ENCODE measurements at regions of chr2 and their contacts with region 1.

Region 1: DNA sequence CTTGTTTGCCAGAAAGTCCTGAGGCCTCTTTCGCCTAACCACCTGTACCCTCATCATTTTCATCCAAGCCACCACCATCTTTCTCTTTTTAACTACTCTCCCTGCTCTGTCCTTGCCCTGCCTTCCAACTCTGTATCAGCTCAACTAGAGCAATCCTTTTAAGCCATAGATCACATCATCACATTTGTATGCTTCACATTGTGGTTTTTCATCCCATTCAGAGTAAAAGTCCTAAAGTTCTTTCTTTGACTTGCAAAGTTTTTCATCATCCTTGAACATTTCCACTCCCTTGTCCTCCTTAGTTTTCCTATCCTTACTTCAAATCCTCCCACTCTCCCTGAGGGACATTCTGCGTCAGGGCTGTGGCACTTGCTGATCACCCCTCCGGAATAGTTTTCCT is 73.9 kb downstream of the SLC39A10 start:
- DNase-seq: no peak
- ATAC-seq: no peak
- H3K4me3 ChIP-seq: no peak overlapping the region
- H3K27ac ChIP-seq: no peak overlapping the region
- H3K4me1 ChIP-seq: no peaks in the 10 kb centered on the region; the same call in 1 of the 2 replicates
- H3K27me3 ChIP-seq: no peaks in the 10 kb centered on the region
- CTCF ChIP-seq: no peak
- POLR2A ChIP-seq: no peak
- RAD21 ChIP-seq: no peak

Region 2: GRCh38 chr2:194054313-194054712 is 1676.6 kb before region 1 on chr2:
- CTCF ChIA-PET with region 1: no interaction called
- POLR2A ChIA-PET with region 1: no interaction called
- dilution Hi-C with region 1: no loop called
- in situ Hi-C with region 1: no loop called
- intact Hi-C with region 1: no loop called
- DNase-seq: no peak
- ATAC-seq: no peak
- H3K4me3 ChIP-seq: no peak overlapping the region
- H3K27ac ChIP-seq: no peak overlapping the region
- H3K4me1 ChIP-seq: no peaks in the 10 kb centered on the region
- H3K27me3 ChIP-seq: no peaks in the 10 kb centered on the region
- CTCF ChIP-seq: no peak
- POLR2A ChIP-seq: no peak
- RAD21 ChIP-seq: no peak

Region 3: GRCh38 chr2:195021711-195022507 is 709.0 kb before region 1 on chr2:
- CTCF ChIA-PET with region 1: no interaction called
- POLR2A ChIA-PET with region 1: no interaction called
- dilution Hi-C with region 1: no loop called
- in situ Hi-C with region 1: no loop called
- intact Hi-C with region 1: no loop called
- DNase-seq: no peak
- ATAC-seq: no peak
- H3K4me3 ChIP-seq: no peak overlapping the region
- H3K27ac ChIP-seq: no peak overlapping the region
- H3K4me1 ChIP-seq: no peaks in the 10 kb centered on the region
- H3K27me3 ChIP-seq: no peaks in the 10 kb centered on the region
- CTCF ChIP-seq: no peak
- POLR2A ChIP-seq: no peak
- RAD21 ChIP-seq: no peak

Region 4: DNA sequence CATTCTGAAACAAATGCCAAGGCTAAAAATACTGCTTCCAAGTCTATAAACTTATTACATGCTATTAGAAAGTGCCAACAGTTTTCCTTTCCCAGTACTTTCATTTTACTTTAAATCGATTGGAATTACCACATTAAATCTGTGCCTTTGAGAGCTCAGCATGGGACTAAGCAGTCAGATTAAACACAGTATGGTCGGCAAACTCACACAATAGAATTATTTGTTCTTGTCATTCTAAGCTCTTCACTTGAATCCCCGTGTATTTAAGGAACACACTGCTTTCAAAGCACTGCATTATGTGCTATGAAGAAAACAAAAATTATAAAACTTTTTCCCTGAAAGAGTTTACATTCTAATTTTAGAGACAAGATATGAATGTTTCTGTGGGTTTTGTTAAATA is 518.3 kb before region 1 on chr2:
- CTCF ChIA-PET with region 1: no interaction called
- POLR2A ChIA-PET with region 1: no interaction called
- dilution Hi-C with region 1: no loop called
- in situ Hi-C with region 1: no loop called
- intact Hi-C with region 1: no loop called
- DNase-seq: no peak
- ATAC-seq: no peak
- H3K4me3 ChIP-seq: no peak overlapping the region
- H3K27ac ChIP-seq: no peak overlapping the region
- H3K4me1 ChIP-seq: no peaks in the 10 kb centered on the region
- H3K27me3 ChIP-seq: no peaks in the 10 kb centered on the region
- CTCF ChIP-seq: no peak
- POLR2A ChIP-seq: no peak
- RAD21 ChIP-seq: no peak

Region 5: DNA sequence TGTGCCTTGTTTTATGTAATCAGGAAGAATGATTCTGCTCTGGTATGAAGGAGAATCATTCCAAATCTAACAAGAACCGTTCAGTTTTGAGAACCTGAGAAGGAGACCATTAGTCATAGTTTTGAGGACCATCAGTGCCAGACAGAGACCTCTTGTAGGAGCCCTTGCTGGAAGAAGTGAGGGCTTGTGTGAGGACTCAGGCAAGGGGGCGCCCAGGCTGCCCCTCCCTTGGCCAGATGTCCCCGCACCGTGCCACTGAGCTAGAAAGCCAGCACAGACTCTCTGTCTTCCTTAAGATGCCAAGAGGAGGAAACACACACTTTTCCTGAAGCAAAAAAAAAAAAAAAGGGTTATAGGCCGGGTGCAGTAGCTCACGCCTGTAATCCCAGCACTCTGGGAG is 129.6 kb before region 1 on chr2:
- CTCF ChIA-PET with region 1: interaction called, 12 read pairs
- POLR2A ChIA-PET with region 1: no interaction called
- dilution Hi-C with region 1: no loop called
- in situ Hi-C with region 1: no loop called
- intact Hi-C with region 1: no loop called
- DNase-seq: peak; percentile 35
- ATAC-seq: peak; percentile 27; the same call in 1 of the 2 replicates
- H3K4me3 ChIP-seq: no peak overlapping the region
- H3K27ac ChIP-seq: no peak overlapping the region
- H3K4me1 ChIP-seq: peaks cover 2% of the 10 kb centered on the region
- H3K27me3 ChIP-seq: no peaks in the 10 kb centered on the region
- CTCF ChIP-seq: no peak
- POLR2A ChIP-seq: no peak
- RAD21 ChIP-seq: no peak